CD8-positive, alpha-beta T cell (primary cell): ENCODE measurements at regions of chr12 and their contacts with region 1.

Region 1: GRCh38 chr12:122051231-122051876 is 27.2 kb upstream of the MLXIP start:
- DNase-seq: no peak
- ATAC-seq: no peak
- H3K4me3 ChIP-seq: no peak overlapping the region
- H3K4me3 Mint-ChIP-seq: no peak overlapping the region
- H3K27ac ChIP-seq: no peak overlapping the region
- H3K27ac Mint-ChIP-seq: no peak overlapping the region
- H3K4me1 ChIP-seq: peaks cover 4% of the 10 kb centered on the region
- H3K4me1 Mint-ChIP-seq: peaks cover 7% of the 10 kb centered on the region
- H3K27me3 ChIP-seq: no peaks in the 10 kb centered on the region
- H3K27me3 Mint-ChIP-seq: no peaks in the 10 kb centered on the region
- CTCF ChIP-seq: no peak

Region 2: GRCh38 chr12:122036153-122036552 is 15.2 kb before region 1 on chr12:
- CTCF ChIA-PET with region 1: interaction called, 11 read pairs
- POLR2A ChIA-PET with region 1: no interaction called
- intact Hi-C with region 1: no loop called
- DNase-seq: no peak
- ATAC-seq: no peak
- H3K4me3 ChIP-seq: no peak overlapping the region
- H3K4me3 Mint-ChIP-seq: no peak overlapping the region
- H3K27ac ChIP-seq: no peak overlapping the region
- H3K27ac Mint-ChIP-seq: no peak overlapping the region
- H3K4me1 ChIP-seq: no peaks in the 10 kb centered on the region
- H3K4me1 Mint-ChIP-seq: no peaks in the 10 kb centered on the region
- H3K27me3 ChIP-seq: no peaks in the 10 kb centered on the region
- H3K27me3 Mint-ChIP-seq: no peaks in the 10 kb centered on the region
- CTCF ChIP-seq: no peak

Region 3: DNA sequence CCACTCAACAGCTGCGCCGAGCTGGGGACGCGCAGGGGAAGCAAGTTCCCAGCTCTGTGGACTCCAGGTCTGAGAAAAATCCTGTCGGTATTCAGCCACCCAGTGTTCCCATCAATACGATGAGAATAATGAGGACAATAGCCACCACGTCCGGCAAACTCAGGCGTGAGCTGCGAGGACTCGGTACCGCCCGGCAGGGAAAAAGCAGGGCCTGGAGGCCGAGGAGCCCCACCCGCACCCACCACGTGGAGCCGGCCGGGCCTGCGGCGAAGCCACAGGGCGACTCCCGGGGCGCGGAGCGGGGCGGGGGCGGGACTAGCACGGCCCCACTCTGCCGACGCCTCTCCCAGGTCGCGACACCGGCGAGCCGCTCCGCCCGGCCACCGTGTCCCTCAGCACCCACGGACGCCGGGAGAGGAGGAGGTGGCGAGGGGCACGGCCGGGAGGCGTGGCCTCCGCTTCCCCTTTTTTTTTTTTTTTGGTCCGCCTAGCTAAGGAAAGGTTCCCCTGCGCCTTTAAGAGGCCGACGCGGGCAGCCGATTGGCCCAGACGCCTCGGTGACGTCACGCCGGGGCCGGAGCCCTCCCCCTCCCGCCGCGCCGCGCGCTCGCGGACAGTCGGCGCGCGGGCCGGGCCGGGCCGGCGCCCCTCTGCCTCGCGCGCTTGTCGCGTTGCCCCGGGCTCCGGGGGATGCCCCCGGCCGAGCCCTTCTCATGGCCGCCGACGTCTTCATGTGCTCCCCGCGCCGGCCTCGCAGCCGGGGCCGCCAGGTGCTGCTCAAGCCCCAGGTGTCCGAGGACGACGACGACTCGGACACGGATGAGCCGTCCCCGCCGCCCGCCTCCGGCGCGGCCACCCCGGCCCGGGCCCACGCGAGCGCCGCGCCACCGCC is 27.0 kb after region 1 on chr12 and contains the start of gene MLXIP:
- CTCF ChIA-PET with region 1: interaction called, 12 read pairs
- POLR2A ChIA-PET with region 1: interaction called, 3 read pairs
- intact Hi-C with region 1: loop called in 1 of 2 experiments (anchors 1 kb)
- DNase-seq: peak; percentile 68 to 94 (median 90)
- ATAC-seq: peak; percentile 72
- H3K4me3 ChIP-seq: peak within 1 kb of the TSS; percentile 68 to 91
- H3K4me3 Mint-ChIP-seq: peak within 1 kb of the TSS; percentile 91
- H3K27ac ChIP-seq: peak within 1 kb of the TSS; percentile 53 to 82
- H3K27ac Mint-ChIP-seq: peak within 1 kb of the TSS; percentile 91
- H3K4me1 ChIP-seq: peaks cover 32% of the 10 kb centered on the region
- H3K4me1 Mint-ChIP-seq: peaks cover 43% of the 10 kb centered on the region
- H3K27me3 ChIP-seq: no peaks in the 10 kb centered on the region
- H3K27me3 Mint-ChIP-seq: no peaks in the 10 kb centered on the region
- CTCF ChIP-seq: no peak
- total RNA-seq, gene MLXIP: 117 to 132 TPM

Region 4: DNA sequence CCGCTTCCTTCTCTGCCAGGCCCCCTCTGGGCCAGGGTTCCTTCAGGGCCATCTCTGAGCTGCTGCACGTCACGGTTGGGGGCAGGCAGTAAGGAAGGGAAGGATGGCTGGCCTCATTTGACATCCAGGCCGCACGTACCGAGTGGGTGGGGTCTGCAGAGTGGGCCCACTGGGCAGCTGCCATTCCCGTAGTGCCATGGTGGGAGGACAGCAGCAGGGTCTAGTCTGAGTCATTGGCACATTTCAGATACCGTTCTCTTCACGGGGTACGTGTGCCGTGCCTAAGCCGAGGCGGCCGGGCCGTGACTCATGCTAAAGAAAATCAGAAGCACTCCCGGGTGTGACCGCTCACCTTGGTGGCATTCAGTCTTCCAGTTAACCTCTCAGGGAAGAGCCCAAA is 78.8 kb after region 1 on chr12:
- CTCF ChIA-PET with region 1: interaction called, 239 read pairs
- POLR2A ChIA-PET with region 1: no interaction called
- intact Hi-C with region 1: no loop called
- DNase-seq: no peak
- ATAC-seq: no peak
- H3K4me3 ChIP-seq: no peak overlapping the region
- H3K4me3 Mint-ChIP-seq: no peak overlapping the region
- H3K27ac ChIP-seq: no peak overlapping the region
- H3K27ac Mint-ChIP-seq: no peak overlapping the region
- H3K4me1 ChIP-seq: peaks cover 11% of the 10 kb centered on the region
- H3K4me1 Mint-ChIP-seq: peaks cover 14% of the 10 kb centered on the region
- H3K27me3 ChIP-seq: no peaks in the 10 kb centered on the region
- H3K27me3 Mint-ChIP-seq: no peaks in the 10 kb centered on the region
- CTCF ChIP-seq: no peak

Region 5: DNA sequence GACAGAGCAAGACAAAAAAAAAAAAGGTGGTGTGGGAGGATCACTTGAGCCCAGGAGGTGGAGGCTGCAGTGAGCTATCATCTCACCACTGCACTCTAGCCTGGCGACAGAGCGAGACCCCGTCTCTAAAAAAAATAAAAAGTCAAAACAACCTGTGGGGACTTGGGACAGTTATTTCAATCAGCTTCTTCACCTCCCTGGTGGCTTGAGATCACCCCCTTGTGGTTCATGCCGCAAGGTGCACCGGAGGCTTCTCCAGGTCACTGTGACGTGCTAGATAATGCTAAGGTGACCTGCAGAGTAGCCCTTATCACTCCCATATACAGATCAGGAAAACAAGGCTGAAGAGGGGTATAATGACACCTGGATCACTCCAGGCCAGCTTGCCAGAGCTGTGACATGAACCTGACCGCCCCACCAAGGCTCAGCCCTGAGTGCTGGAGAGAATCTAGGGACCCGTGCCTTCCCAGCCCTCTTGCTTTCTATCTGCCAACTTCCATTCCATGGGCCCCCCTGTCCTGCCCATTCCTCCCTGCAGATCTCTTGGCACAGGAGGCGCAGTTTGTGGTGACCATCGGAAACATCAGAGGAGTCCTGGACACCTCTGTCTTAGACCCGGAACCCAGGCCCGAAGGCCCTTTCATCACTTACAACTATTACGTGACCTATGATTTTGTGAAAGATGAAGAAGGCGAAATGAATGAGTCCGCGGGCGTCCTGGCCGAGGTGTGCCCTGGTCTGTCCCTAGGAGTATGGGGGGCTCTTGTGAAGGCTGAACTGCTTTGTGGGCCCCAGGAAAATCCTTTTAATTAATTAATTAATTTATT is 139.7 kb after region 1 on chr12:
- CTCF ChIA-PET with region 1: interaction called, 37 read pairs
- POLR2A ChIA-PET with region 1: no interaction called
- intact Hi-C with region 1: loop called (anchors 1 kb)
- DNase-seq: peak; percentile 41 to 78 (median 68)
- ATAC-seq: peak; percentile 93
- H3K4me3 ChIP-seq: no peak overlapping the region
- H3K4me3 Mint-ChIP-seq: no peak overlapping the region
- H3K27ac ChIP-seq: no peak overlapping the region
- H3K27ac Mint-ChIP-seq: no peak overlapping the region
- H3K4me1 ChIP-seq: peaks cover 3% of the 10 kb centered on the region
- H3K4me1 Mint-ChIP-seq: peaks cover 2% of the 10 kb centered on the region
- H3K27me3 ChIP-seq: no peaks in the 10 kb centered on the region
- H3K27me3 Mint-ChIP-seq: peaks cover 3% of the 10 kb centered on the region
- CTCF ChIP-seq: peak; percentile 69